IMR-90 (cell line): ENCODE measurements at regions of chr13 and their contacts with region 1.

Region 1: DNA sequence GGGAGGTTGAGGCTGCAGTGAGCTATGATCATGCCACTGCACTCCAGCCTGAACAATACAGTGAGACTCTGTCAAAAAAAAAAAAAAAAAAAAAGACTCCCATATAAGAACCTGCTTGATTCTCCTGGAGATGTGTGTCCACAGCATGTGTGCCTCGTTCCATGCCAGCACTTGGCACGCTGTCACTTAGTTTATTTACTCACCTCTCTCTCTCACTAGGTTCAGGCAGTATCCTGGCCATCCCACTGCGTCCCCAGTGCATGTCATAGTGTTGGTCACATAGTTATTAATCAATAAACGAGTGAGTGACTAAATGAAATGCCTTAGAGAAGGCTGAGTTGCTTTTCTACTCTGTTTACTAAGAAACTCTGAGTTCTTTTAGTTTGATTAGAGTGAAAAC is 79.1 kb upstream of the GPR12 start:
- DNase-seq: no peak
- ATAC-seq: no peak
- H3K4me3 ChIP-seq: no peak overlapping the region
- H3K27ac ChIP-seq: no peak overlapping the region
- H3K4me1 ChIP-seq: no peaks in the 10 kb centered on the region
- H3K27me3 ChIP-seq: peaks cover 3% of the 10 kb centered on the region
- CTCF ChIP-seq: no peak
- POLR2A ChIP-seq: no peak
- RAD21 ChIP-seq: no peak

Region 2: DNA sequence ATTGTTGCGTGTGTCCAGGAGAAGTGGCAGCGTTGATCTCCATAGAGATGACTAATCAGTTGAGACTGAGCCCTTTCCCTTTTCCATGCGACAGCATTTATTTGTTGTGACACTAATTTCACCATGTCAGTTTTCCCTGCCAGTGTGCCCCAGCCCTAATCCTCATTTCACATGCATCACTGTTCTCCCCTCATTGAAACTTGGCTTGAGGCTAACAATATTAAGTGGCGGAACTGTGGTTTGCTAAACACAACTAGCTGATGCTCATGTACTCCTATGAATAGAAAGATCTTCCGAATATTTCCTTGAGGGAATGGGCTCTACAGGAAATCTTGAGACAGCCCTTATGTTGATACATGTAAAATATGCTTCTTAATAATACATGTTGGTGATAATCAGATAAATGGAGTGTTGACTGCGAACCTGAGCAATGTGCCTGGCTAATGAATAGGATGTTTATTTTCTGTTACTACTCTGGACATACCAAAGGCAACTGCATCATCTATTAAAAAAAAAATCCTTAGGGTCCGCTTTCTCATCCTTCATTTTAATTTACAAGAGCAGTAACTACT is 1209.3 kb before region 1 on chr13:
- CTCF ChIA-PET with region 1: no interaction called
- POLR2A ChIA-PET with region 1: no interaction called
- dilution Hi-C with region 1: no loop called
- in situ Hi-C with region 1: no loop called
- intact Hi-C with region 1: loop called (anchors 5 kb)
- DNase-seq: no peak
- ATAC-seq: no peak
- H3K4me3 ChIP-seq: no peak overlapping the region
- H3K27ac ChIP-seq: no peak overlapping the region
- H3K4me1 ChIP-seq: no peaks in the 10 kb centered on the region
- H3K27me3 ChIP-seq: no peaks in the 10 kb centered on the region
- CTCF ChIP-seq: no peak
- POLR2A ChIP-seq: no peak
- RAD21 ChIP-seq: no peak

Region 3: GRCh38 chr13:26964278-26965250 is 124.9 kb after region 1 on chr13:
- CTCF ChIA-PET with region 1: no interaction called
- POLR2A ChIA-PET with region 1: no interaction called
- dilution Hi-C with region 1: no loop called
- in situ Hi-C with region 1: no loop called
- intact Hi-C with region 1: no loop called
- DNase-seq: peak; percentile 67
- ATAC-seq: no peak; the same call in 1 of the 2 replicates
- H3K4me3 ChIP-seq: no peak overlapping the region
- H3K27ac ChIP-seq: no peak overlapping the region
- H3K4me1 ChIP-seq: peaks cover 18% of the 10 kb centered on the region; the same call in 1 of the 2 replicates
- H3K27me3 ChIP-seq: peaks cover 24% of the 10 kb centered on the region
- CTCF ChIP-seq: no peak
- POLR2A ChIP-seq: no peak
- RAD21 ChIP-seq: no peak